PC-9 (cell line): ENCODE measurements at regions of chr6 and their contacts with region 1.

Region 1: GRCh38 chr6:31739639-31740396 is at the start of gene MSH5:
- DNase-seq: peak; percentile 98
- H3K4me3 ChIP-seq: peak within 1 kb of the TSS; percentile 69
- H3K27ac ChIP-seq: peak within 1 kb of the TSS; percentile 14
- H3K4me1 ChIP-seq: peaks cover 33% of the 10 kb centered on the region
- H3K27me3 ChIP-seq: no peaks in the 10 kb centered on the region
- CTCF ChIP-seq: no peak
- total RNA-seq, gene MSH5: 50.0 and 68.8 TPM in 2 replicates

Region 2: DNA sequence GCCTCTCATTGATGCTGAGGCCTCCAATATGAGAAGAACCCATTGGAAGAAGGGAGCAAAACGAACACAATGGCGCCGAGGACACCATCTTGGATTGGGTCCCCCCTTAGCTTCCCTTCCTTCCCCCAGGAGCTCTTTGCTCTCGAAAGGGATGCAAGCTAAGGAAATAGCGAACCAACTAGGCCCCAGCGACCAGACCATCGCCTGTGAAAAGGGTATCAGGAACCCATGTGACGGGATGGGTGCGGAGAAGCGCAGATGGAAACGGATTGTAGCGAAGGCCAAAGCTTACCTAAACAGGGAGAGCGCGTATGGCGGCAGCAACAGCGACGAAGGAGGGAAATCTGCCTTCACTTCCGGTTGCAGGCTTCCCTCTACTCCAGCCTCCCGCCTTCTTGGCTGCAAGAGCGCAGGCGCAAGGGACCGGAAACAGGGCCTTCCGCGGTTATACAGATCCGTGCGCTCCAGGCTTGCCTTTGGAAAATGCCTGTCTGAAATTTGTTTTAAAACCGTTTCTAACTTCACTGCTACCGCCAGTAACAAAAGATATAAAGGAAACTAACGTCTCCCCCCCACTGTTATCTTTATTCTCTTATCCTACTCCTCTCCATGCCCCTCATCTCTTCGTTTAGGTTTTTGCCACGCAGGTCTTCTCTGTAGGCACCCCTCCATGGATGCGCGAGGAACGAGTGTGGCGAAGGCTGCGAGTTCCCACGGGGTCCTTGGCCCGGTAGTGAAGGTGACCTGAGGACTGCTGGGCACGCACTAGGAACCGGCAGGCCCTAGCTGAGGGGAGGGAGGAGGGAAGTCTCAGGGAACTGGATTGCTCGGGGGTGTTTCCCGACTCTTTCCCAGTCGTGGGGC is 197.9 kb before region 1 on chr6 and contains the start of gene DDX39B:
- CTCF ChIA-PET with region 1: no interaction called
- POLR2A ChIA-PET with region 1: no interaction called
- intact Hi-C with region 1: loop called (anchors 10 kb)
- DNase-seq: peak; percentile 89 to 90
- H3K4me3 ChIP-seq: peak within 1 kb of the TSS; percentile 75
- H3K27ac ChIP-seq: peak within 1 kb of the TSS; percentile 95
- H3K4me1 ChIP-seq: peaks cover 29% of the 10 kb centered on the region
- H3K27me3 ChIP-seq: no peaks in the 10 kb centered on the region
- CTCF ChIP-seq: no peak
- total RNA-seq, gene DDX39B: 383 and 436 TPM in 2 replicates

Region 3: DNA sequence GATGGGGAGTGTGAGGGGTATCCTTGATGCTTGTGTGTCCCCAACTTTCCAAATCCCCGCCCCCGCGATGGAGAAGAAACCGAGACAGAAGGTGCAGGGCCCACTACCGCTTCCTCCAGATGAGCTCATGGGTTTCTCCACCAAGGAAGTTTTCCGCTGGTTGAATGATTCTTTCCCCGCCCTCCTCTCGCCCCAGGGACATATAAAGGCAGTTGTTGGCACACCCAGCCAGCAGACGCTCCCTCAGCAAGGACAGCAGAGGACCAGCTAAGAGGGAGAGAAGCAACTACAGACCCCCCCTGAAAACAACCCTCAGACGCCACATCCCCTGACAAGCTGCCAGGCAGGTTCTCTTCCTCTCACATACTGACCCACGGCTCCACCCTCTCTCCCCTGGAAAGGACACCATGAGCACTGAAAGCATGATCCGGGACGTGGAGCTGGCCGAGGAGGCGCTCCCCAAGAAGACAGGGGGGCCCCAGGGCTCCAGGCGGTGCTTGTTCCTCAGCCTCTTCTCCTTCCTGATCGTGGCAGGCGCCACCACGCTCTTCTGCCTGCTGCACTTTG is 164.4 kb before region 1 on chr6 and contains the start of gene TNF:
- CTCF ChIA-PET with region 1: no interaction called
- POLR2A ChIA-PET with region 1: no interaction called
- intact Hi-C with region 1: no loop called
- DNase-seq: no peak
- H3K4me3 ChIP-seq: no peak within 1 kb of the TSS
- H3K27ac ChIP-seq: no peak within 1 kb of the TSS
- H3K4me1 ChIP-seq: 0 out of 2 replicates have a peak, but pooled peaks cover 5% of the 10 kb centered on the region
- H3K27me3 ChIP-seq: 0 out of 2 replicates have a peak, but pooled peaks cover 5% of the 10 kb centered on the region
- CTCF ChIP-seq: no peak
- total RNA-seq, gene TNF: not detected in 2 replicates

Region 4: DNA sequence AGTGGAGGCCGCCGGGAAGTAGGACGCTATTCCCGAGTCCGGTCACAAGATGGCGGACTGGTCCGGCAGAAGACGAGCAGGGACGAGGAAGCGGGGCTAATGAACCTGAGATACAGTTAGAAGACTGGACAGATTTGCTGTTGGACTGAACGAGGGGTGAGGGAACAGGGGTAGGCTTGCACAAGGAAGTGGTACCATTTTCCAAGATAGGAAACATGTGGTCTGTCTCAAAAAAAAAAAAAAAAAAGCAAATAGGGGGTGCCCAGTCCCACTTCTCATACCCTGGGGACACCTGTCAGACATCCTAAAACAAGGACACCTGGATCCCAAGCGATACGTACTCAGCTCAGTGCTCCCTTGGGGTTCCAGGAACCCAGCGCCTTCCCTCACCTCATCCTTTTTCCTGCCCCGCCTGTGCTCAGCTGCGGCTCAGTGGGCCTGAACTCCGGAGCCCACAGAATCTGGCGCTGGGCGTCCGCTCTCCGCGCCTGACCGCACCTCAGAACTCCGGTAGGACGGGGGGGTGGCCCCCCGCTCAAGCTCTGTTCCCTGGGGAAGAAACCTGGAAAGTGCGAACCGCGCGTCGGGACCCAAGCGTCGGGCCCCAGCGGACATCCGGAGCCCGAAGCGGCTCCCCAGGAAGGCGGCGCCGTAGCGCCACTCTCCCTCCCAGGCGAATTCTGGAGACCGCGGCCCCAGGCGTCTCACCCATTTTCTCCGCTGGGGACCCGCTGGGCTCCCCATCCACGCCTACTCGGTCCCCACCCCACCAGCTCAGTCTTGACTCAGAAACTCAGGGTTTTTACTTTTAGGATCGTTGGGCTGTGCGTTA is 58.8 kb before region 1 on chr6 and contains the start of gene LY6G5C:
- CTCF ChIA-PET with region 1: interaction called, 8 read pairs
- POLR2A ChIA-PET with region 1: interaction called, 17 read pairs
- intact Hi-C with region 1: loop called (anchors 1 kb)
- DNase-seq: peak; percentile 82 to 88
- H3K4me3 ChIP-seq: peak within 1 kb of the TSS; percentile 70
- H3K27ac ChIP-seq: peak within 1 kb of the TSS; percentile 31; the same call in 1 of the 2 replicates
- H3K4me1 ChIP-seq: peaks cover 17% of the 10 kb centered on the region
- H3K27me3 ChIP-seq: no peaks in the 10 kb centered on the region
- CTCF ChIP-seq: peak; percentile 54; the same call in 1 of the 2 replicates
- total RNA-seq, gene LY6G5C: 2.6 and 3.7 TPM in 2 replicates

Region 5: GRCh38 chr6:31729515-31729978 is 10.3 kb before region 1 on chr6:
- CTCF ChIA-PET with region 1: interaction called, 12 read pairs
- POLR2A ChIA-PET with region 1: interaction called, 6 read pairs
- intact Hi-C with region 1: loop called (anchors 1 kb)
- DNase-seq: peak; percentile 78 to 91
- H3K4me3 ChIP-seq: peak overlapping the region; percentile 81
- H3K27ac ChIP-seq: no peak overlapping the region
- H3K4me1 ChIP-seq: peaks cover 15% of the 10 kb centered on the region
- H3K27me3 ChIP-seq: no peaks in the 10 kb centered on the region
- CTCF ChIP-seq: peak; percentile 6; the same call in 1 of the 2 replicates

Region 6: DNA sequence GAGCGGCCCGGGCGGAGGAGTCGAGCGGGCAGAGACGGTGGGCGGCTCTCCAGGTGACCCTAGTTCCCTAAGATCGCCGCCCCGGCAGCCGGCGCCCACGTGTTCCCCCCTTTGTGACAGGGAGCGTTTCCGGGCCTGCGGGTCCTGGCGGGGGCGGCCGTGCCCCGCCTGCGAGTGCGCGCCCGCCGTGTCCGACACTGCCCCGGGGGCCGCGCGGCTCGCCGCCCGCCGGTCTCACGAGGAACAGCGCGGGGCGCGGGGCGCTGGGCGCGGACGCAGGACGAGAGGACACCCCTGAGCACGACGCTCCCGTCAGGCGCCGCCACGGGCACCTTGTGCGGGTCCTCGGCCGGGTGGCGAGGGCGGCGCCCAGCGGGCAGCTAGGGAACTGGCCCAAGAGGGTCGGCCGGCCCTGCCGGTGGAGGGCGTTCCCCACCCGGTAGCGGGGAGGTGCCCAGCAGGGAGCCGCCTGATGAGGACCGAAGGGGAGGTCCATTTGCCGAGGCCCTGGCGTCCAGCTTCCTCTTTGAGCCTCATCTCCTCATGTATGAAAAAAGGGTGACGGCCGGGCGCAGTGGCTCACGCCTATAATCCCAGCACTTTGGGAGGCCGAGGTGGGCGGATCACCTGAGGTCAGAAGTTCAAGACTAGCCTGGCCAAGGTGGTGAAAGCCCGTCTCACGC is 55.9 kb after region 1 on chr6 and contains the start of gene VARS1:
- CTCF ChIA-PET with region 1: interaction called, 7 read pairs
- POLR2A ChIA-PET with region 1: interaction called, 5 read pairs
- intact Hi-C with region 1: loop called (anchors 2 kb)
- DNase-seq: peak; percentile 89 to 96
- H3K4me3 ChIP-seq: peak within 1 kb of the TSS; percentile 86
- H3K27ac ChIP-seq: peak within 1 kb of the TSS; percentile 78
- H3K4me1 ChIP-seq: peaks cover 28% of the 10 kb centered on the region
- H3K27me3 ChIP-seq: no peaks in the 10 kb centered on the region
- CTCF ChIP-seq: peak; percentile 73
- total RNA-seq, gene VARS1: 99.6 and 124 TPM in 2 replicates

Region 7: GRCh38 chr6:32087574-32088486 is 348.0 kb after region 1 on chr6:
- CTCF ChIA-PET with region 1: no interaction called
- POLR2A ChIA-PET with region 1: interaction called, 17 read pairs
- intact Hi-C with region 1: no loop called
- DNase-seq: peak; percentile 72 to 88
- H3K4me3 ChIP-seq: 0 out of 2 replicates have a peak overlapping the region, but pooled peaks have one; percentile 36
- H3K27ac ChIP-seq: no peak overlapping the region
- H3K4me1 ChIP-seq: peaks cover 47% of the 10 kb centered on the region
- H3K27me3 ChIP-seq: no peaks in the 10 kb centered on the region
- CTCF ChIP-seq: peak; percentile 54